Esophagus muscularis mucosa (tissue), 4 donors: ENCODE measurements at regions of chr19 and their contacts with region 1.

Region 1: DNA sequence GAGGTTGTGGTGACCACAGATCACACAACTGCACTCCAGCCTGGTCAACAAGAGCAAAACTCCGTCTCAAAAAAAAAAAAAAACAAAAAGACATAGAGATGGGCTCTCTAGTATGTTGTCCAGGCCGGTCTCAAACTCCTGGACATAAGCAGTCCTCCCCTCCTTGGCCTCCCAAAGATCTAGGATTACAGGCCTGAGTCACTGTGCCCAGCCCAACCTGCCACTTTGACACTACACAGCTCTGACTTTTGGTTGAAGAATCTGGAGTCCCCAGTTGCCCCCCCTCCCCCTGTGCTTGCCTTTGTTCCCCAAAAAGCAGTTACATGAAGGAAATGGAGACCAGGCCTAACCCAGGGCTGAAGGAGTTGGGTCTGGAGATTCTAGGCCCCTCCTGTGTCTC is 12.9 kb downstream of the CARM1 start:
- DNase-seq: no peak
- H3K4me3 ChIP-seq: no peak overlapping the region
- H3K27ac ChIP-seq: peak overlapping the region in 1 of 4 donors; percentile 16
- H3K4me1 ChIP-seq: peaks cover 26 to 67% (median 49%) of the 10 kb centered on the region in 4 donors
- H3K27me3 ChIP-seq: peaks cover 0 to 4% (median 0%) of the 10 kb centered on the region in 4 donors
- CTCF ChIP-seq: no peak
- EP300 ChIP-seq: no peak
- POLR2A ChIP-seq: no peak

Region 2: DNA sequence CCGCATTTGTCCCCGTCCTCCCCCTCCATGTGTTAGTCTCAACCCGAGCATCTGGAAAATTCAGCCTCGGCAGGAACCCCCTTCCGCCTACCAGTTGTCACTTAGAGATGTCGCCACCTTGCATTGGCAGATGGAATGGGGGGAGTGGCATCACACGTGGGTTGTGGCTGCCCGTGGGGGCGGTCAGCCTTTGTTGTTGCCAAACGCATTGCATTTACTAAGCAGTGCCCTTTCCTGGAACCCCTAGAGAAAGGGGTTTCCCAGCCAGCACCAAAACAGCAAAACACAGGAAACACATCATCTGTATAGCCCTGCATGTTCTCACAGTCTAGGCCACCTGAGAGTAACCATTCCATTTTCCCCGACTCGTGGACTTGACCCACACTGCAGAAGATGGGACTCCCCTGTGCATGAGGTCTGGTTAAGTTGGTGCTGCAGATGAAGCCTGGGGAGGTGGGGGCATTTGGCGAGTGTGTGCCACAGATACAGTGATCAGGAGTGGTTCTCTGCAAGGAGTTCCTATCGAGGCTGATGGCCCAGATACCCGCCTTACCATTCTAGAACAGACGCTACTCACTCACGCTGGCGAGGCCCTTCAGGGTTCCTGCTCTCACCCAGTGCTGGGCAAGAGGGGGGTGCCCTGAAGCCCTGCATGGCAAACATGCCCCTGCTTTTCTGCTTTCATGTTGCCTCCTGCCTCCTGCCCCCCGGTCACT is 86.6 kb before region 1 on chr19:
- intact Hi-C with region 1: no loop called
- DNase-seq: no peak
- H3K4me3 ChIP-seq: no peak overlapping the region
- H3K27ac ChIP-seq: no peak overlapping the region
- H3K4me1 ChIP-seq: peaks cover 9 to 15% (median 9%) of the 10 kb centered on the region in 4 donors
- H3K27me3 ChIP-seq: no peaks in the 10 kb centered on the region
- CTCF ChIP-seq: no peak
- EP300 ChIP-seq: no peak
- POLR2A ChIP-seq: no peak

Region 3: DNA sequence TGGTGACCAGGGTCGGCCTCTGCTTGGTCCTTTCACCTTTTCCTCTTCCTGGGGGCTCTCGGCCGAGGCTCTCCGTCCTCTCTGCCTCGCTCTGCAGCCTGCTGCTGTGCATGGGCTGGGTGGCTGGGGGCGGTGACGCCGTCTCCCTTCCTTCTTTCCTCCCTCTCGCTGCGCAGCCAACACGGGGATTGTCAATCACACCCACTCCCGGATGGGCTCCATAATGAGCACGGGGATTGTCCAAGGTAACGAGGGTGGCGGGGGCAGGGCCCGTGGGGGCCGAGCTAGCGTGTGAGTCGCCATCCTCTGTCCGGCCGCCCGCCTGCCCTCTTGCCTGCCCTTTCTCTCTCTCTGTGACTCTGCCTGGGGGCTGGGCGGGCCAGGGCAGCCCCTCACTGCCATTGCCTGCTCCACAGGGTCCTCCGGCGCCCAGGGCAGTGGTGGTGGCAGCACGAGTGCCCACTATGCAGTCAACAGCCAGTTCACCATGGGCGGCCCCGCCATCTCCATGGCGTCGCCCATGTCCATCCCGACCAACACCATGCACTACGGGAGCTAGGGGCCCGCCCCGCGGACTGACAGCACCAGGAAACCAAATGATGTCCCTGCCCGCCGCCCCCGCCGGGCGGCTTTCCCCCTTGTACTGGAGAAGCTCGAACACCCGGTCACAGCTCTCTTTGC is 37.1 kb after region 1 on chr19:
- intact Hi-C with region 1: loop called (anchors 5 kb)
- DNase-seq: no peak
- H3K4me3 ChIP-seq: no peak overlapping the region
- H3K27ac ChIP-seq: no peak overlapping the region
- H3K4me1 ChIP-seq: no peaks in the 10 kb centered on the region
- H3K27me3 ChIP-seq: no peaks in the 10 kb centered on the region
- CTCF ChIP-seq: no peak
- EP300 ChIP-seq: no peak
- POLR2A ChIP-seq: no peak

Region 4: DNA sequence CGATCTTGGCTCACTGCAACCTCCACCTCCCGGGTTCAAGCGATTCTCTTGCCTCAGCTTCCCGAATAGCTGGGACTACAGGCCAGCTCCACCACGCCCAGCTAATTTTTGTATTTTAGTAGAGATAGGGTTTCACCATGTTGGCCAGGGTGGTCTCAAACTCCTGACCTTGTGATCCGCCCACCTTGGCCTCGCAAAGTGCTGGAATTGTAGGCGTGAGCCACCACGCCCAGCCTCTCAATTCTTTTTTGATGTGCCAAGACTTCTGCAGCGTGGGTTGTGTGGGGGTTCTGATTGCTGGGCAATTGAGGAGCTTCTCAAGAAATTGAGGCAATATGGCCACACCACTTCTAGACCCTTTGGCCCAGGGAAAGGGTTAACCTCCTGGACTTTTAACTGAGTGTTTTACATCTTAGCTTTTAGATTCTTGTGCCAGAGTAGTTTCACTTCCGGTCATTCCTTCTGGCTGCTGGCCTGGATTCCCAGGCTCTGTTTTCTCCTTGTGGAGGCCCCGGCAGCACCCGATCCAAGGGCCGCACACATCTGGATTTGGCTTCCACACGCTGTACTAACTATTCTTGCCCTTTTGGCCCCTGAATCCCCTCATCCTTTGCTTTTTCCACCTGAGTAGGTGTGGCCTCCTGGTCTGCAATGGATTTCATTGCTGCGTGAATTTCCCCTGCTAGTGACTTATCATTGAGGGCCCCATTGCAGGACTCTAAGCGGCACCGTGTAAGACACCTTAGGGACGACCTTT is 91.3 kb after region 1 on chr19:
- intact Hi-C with region 1: no loop called
- DNase-seq: no peak
- H3K4me3 ChIP-seq: peak overlapping the region; percentile 5 to 45 (median 22)
- H3K27ac ChIP-seq: peak overlapping the region; percentile 67 to 81 (median 68)
- H3K4me1 ChIP-seq: peaks cover 26 to 48% (median 43%) of the 10 kb centered on the region in 4 donors
- H3K27me3 ChIP-seq: no peaks in the 10 kb centered on the region
- CTCF ChIP-seq: no peak
- EP300 ChIP-seq: no peak
- POLR2A ChIP-seq: no peak